ENCODE measurements at regions of chr4 and their contacts with region 1.

Region 1: GRCh38 chr4:150867148-150867547 is 147.9 kb downstream of the LRBA start:
- DNase-seq: no peak
- H3K4me3 ChIP-seq: no peak overlapping the region
- H3K27ac ChIP-seq: no peak overlapping the region
- H3K4me1 ChIP-seq: no peaks in the 10 kb centered on the region
- H3K27me3 ChIP-seq: no peaks in the 10 kb centered on the region
- CTCF ChIP-seq: peak; percentile 46 to 70 (median 60)
- POLR2A ChIP-seq: no peak

Region 2: GRCh38 chr4:149999485-150000074 is 867.6 kb before region 1 on chr4:
- intact Hi-C with region 1: loop called (anchors 10 kb)
- DNase-seq: no peak
- H3K4me3 ChIP-seq: no peak overlapping the region
- H3K27ac ChIP-seq: no peak overlapping the region
- H3K4me1 ChIP-seq: peaks cover 0 to 9% (median 0%) of the 10 kb centered on the region in 3 donors
- H3K27me3 ChIP-seq: no peaks in the 10 kb centered on the region
- CTCF ChIP-seq: peak in 5 of 6 experiments; percentile 35 to 68 (median 60)
- POLR2A ChIP-seq: no peak

Region 3: DNA sequence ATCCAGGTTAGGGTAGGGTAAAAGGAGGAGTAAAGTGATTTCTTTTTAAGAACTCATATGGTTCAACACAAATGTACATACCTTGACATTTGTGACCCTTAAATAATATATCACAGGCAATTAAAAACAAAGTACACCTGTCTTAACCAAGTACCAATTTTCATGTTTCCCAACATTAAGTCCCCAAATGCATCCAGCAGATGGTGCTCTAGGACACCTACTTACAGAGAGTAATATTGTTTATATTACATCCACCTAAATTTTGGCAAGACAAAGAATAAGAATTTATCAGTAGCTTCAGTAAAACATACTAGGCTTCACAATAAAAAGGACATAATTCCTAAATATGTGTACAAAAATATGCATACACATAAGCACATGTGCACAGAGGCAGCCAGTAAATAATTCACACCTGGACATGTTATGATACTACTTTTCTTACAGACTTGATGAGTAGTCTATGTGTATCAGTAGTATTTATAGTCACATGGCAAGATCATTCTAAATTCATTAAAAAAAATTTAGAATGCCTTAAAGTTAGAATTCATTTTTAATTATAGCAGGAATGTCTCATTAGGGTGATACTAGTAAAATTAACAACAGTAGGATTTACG is 569.2 kb before region 1 on chr4:
- intact Hi-C with region 1: loop called (anchors 10 kb)
- DNase-seq: no peak
- H3K4me3 ChIP-seq: no peak overlapping the region
- H3K27ac ChIP-seq: no peak overlapping the region
- H3K4me1 ChIP-seq: no peaks in the 10 kb centered on the region
- H3K27me3 ChIP-seq: no peaks in the 10 kb centered on the region
- CTCF ChIP-seq: peak; percentile 24 to 64 (median 46)
- POLR2A ChIP-seq: no peak

Region 4: DNA sequence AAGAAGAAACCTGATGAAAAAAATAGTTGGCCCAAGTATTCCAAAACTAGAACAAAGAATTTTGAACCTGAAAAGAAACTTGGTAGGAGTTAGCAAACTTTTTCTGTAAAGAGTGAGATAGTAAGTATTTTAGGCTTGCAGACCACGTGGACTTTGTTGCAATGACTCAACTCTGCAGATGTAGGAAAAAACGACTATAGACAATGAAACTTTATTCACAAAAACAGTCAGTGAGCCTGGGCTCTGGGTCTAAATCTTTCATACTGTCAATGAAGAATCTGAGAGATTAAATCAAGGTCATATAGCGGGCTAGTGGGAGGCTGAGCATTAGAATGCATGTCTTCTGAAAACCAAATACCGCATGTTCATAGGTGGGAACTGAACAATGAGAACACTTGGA is 435.3 kb after region 1 on chr4:
- intact Hi-C with region 1: no loop called
- DNase-seq: no peak
- H3K4me3 ChIP-seq: no peak overlapping the region
- H3K27ac ChIP-seq: no peak overlapping the region
- H3K4me1 ChIP-seq: peaks cover 0 to 26% (median 4%) of the 10 kb centered on the region in 3 donors
- H3K27me3 ChIP-seq: no peaks in the 10 kb centered on the region
- CTCF ChIP-seq: no peak
- POLR2A ChIP-seq: no peak

Measured in esophagus squamous epithelium (tissue), 5 donors.